Activated B cell treated with CpG ODN at 0.5 μM for 24 hours (primary cell): ENCODE measurements at regions of chr11 and their contacts with region 1.

Region 1: GRCh38 chr11:65859200-65859811 is 927 bp upstream of the MUS81 start:
- DNase-seq: peak; percentile 90
- ATAC-seq: peak; percentile 64
- H3K4me3 Mint-ChIP-seq: peak overlapping the region; percentile 99
- H3K27ac Mint-ChIP-seq: peak overlapping the region; percentile 98
- H3K4me1 Mint-ChIP-seq: peaks cover 53% of the 10 kb centered on the region
- H3K27me3 Mint-ChIP-seq: no peaks in the 10 kb centered on the region
- CTCF ChIP-seq: no peak

Region 2: GRCh38 chr11:65117216-65118096 is 741.9 kb before region 1 on chr11 and contains the start of gene ZNHIT2:
- CTCF ChIA-PET with region 1: no interaction called
- POLR2A ChIA-PET with region 1: interaction called, 3 read pairs
- intact Hi-C with region 1: loop called (anchors 1 kb)
- DNase-seq: peak; percentile 98
- ATAC-seq: peak; percentile 70
- H3K4me3 Mint-ChIP-seq: peak within 1 kb of the TSS; percentile 87
- H3K27ac Mint-ChIP-seq: peak within 1 kb of the TSS; percentile 89
- H3K4me1 Mint-ChIP-seq: peaks cover 76% of the 10 kb centered on the region
- H3K27me3 Mint-ChIP-seq: no peaks in the 10 kb centered on the region
- CTCF ChIP-seq: peak; percentile 34
- total RNA-seq, gene ZNHIT2: 11.3 and 13.4 TPM in 2 replicates

Region 3: DNA sequence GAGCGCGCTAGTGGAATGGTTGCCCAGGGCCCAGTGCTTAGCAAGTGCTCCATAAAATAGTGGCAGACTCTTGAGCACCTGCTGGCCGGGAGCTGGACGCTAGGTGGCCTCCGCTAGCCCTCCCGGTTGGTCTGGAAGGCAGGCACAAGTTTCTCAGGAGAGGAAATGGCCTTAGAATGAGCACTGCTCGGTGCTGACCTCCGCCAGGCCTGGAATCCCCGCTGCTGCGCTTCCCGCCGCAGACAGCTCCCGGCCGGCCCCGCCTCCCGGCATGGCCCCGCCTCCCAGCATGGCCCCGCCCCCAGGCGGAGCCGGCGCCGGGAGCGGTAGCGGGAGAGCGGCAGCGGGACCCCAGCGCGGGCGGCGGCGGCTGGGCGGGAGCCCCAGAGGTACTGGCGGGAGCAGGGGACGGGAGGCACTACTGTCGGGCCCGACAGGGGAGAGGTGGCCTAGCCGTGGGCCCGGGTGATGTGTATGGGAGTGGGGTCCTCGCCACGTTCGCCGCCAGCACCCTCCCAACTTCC is 221.4 kb before region 1 on chr11 and contains the start of gene SIPA1:
- CTCF ChIA-PET with region 1: interaction called, 5 read pairs
- POLR2A ChIA-PET with region 1: interaction called, 46 read pairs
- intact Hi-C with region 1: no loop called
- DNase-seq: peak; percentile 86
- ATAC-seq: peak; percentile 35
- H3K4me3 Mint-ChIP-seq: peak within 1 kb of the TSS; percentile 94
- H3K27ac Mint-ChIP-seq: peak within 1 kb of the TSS; percentile 96
- H3K4me1 Mint-ChIP-seq: peaks cover 51% of the 10 kb centered on the region
- H3K27me3 Mint-ChIP-seq: no peaks in the 10 kb centered on the region
- CTCF ChIP-seq: no peak
- total RNA-seq, gene SIPA1: 236 and 252 TPM in 2 replicates

Region 4: GRCh38 chr11:65743928-65744698 is 115.2 kb before region 1 on chr11:
- CTCF ChIA-PET with region 1: no interaction called
- POLR2A ChIA-PET with region 1: no interaction called
- intact Hi-C with region 1: no loop called
- DNase-seq: no peak
- ATAC-seq: no peak
- H3K4me3 Mint-ChIP-seq: no peak overlapping the region
- H3K27ac Mint-ChIP-seq: no peak overlapping the region
- H3K4me1 Mint-ChIP-seq: peaks cover 6% of the 10 kb centered on the region
- H3K27me3 Mint-ChIP-seq: peaks cover 4% of the 10 kb centered on the region
- CTCF ChIP-seq: no peak

Region 5: DNA sequence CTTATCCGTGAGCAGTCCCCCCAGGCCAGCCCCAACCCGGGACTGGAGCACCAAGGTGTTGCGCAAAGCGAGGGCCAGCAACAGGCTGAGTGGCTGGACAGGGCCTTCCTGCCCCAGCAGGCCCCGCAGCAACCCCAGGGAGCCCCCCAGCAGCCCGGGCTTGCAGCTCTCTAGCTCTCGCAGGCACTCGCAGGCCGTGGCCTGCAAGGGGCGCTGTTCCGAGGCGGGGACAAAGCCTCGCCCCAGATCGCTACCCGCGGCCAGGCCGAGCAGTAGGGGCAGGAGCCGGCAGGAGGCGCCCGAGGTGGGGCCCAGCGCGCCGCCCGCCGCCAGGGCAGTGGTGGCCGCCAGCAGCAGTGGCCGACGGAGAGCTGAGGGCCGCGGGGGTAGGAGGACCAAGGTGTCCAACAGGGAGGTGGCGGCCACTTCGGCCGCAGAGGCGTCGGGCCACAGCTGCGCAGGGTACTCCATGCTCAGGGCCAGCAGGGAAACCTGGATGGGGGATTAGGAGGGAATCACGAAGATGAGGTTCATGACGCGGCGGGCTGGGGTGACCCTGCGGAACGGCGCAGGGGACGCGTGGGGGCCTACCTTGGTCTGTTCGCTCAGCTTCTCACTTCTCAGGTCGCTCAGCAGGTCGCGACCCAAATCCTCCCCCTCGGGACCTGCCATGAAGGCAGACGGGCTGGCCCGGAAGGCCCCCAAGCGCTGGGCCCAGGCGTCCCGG is 79.3 kb before region 1 on chr11:
- CTCF ChIA-PET with region 1: interaction called, 4 read pairs
- POLR2A ChIA-PET with region 1: interaction called, 36 read pairs
- intact Hi-C with region 1: loop called (anchors 2 kb)
- DNase-seq: peak; percentile 78
- ATAC-seq: peak; percentile 63
- H3K4me3 Mint-ChIP-seq: peak overlapping the region; percentile 86
- H3K27ac Mint-ChIP-seq: peak overlapping the region; percentile 59
- H3K4me1 Mint-ChIP-seq: peaks cover 13% of the 10 kb centered on the region
- H3K27me3 Mint-ChIP-seq: no peaks in the 10 kb centered on the region
- CTCF ChIP-seq: no peak

Region 6: DNA sequence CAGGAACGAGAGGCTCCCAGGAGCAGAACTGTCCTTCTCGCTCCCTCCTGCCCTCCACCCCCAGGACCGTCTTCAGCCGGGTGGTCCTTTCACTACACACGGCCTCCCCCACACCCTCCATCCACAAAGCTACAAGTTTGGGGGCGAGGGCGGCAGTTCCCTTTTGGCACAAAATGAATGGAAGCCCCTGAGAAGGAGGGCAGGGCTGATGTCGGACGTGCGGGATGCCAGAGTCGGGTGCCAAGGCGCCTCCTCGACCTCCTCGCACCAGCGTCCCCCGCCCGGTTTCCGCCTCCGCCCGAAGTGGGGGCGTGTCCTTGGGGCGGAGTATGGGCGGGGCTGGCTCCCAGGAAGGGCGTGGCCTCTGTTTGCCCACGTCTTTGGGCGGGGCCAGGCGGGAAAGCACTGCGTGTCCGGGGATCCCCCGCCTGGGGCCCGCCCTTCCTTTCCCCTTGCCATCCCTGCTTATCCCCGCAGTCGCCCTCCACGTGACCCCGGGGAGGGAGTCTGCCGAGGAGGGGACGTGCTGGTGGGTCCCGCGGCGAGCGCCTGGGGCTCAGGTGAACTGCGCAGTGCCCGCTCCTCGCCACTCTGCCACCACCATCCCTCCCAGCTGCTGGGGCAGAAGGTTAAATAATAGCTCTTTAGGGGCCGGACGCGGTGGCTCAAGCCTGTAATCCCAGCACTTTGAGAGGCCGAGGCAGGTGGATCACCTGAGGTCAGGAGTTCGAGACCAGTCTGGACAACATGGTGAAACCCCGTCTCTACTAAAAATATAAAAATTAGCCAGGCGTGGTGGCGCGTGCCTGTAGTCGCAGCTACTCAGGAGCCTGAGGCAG is 14.2 kb after region 1 on chr11:
- CTCF ChIA-PET with region 1: interaction called, 10 read pairs
- POLR2A ChIA-PET with region 1: interaction called, 113 read pairs
- intact Hi-C with region 1: loop called (anchors 1 kb)
- DNase-seq: peak; percentile 99
- ATAC-seq: peak; percentile 95
- H3K4me3 Mint-ChIP-seq: peak overlapping the region; percentile 90
- H3K27ac Mint-ChIP-seq: peak overlapping the region; percentile 88
- H3K4me1 Mint-ChIP-seq: peaks cover 20% of the 10 kb centered on the region
- H3K27me3 Mint-ChIP-seq: peaks cover 5% of the 10 kb centered on the region
- CTCF ChIP-seq: no peak

Region 7: DNA sequence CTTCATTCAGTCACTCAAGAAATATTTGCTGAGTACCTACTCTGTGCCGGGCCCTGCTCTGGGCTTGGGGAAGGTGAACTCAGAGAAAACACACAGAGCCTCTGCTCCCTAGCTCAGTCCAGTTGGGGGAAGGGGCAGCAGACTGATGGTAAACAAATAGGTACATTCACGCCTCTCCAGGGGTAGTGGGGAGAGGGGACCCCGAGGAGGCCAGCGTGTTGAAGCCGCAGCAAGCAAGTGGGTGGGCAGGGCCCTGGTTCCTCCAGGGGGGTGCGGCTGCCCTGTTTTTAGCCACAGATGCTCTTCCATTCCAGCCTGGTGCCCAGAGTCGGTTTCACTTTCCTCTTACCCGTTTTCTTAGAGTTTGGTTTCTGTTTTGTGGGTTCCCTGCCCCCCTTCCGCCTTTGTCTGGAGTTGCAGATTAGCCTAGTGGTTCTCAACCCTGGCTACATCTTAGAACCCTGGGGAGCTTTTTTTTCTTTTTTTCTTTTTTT is 68.6 kb after region 1 on chr11:
- CTCF ChIA-PET with region 1: no interaction called
- POLR2A ChIA-PET with region 1: interaction called, 17 read pairs
- intact Hi-C with region 1: no loop called
- DNase-seq: peak; percentile 45
- ATAC-seq: peak; percentile 93
- H3K4me3 Mint-ChIP-seq: peak overlapping the region; percentile 79
- H3K27ac Mint-ChIP-seq: peak overlapping the region; percentile 93
- H3K4me1 Mint-ChIP-seq: peaks cover 22% of the 10 kb centered on the region
- H3K27me3 Mint-ChIP-seq: no peaks in the 10 kb centered on the region
- CTCF ChIP-seq: no peak

Region 8: DNA sequence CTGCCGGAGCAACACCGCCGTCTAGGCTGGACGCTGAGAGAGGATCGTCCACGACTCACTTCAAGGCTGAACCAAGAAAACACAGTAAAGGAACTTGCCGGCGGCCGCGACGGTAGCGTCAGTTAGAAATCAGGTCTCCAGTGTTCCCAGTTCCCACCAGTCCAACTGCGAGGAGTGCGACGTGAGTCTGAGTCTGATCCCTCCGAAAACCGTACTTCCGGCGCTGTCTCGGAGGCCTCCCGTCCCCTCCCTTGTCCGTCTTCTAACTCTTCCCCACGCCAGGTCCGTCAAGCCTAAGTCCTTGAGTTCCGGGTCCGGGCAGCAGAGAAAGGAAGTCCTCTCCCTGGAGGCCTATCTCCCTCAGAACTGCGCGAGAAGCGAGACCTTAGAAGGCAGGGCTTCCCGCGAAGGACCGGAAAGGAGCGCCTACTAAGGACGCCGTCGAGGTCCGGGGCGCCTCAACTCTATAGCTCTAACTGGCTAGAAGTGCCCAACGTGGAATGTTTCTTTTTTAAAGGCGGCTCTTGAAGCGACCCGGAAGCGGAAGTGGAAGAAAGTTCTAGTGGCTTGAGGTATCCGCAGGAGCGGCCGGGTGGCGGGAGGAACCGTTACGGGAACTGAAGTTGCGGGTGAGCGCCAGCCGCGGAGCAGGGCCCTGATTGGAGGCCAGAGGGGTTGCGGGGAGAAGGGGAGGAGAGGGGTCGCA is 142.8 kb after region 1 on chr11 and contains the starts of genes BANF1 and EIF1AD:
- CTCF ChIA-PET with region 1: no interaction called
- POLR2A ChIA-PET with region 1: interaction called, 28 read pairs
- intact Hi-C with region 1: loop called (anchors 1 kb)
- DNase-seq: peak; percentile 86
- ATAC-seq: peak; percentile 82
- H3K4me3 Mint-ChIP-seq: peak within 1 kb of the TSS; percentile 100
- H3K27ac Mint-ChIP-seq: peak within 1 kb of the TSS; percentile 98
- H3K4me1 Mint-ChIP-seq: peaks cover 36% of the 10 kb centered on the region
- H3K27me3 Mint-ChIP-seq: no peaks in the 10 kb centered on the region
- CTCF ChIP-seq: no peak
- total RNA-seq, gene BANF1: 220 and 228 TPM in 2 replicates
- total RNA-seq, gene EIF1AD: 50.7 and 58.9 TPM in 2 replicates